Activated CD8-positive, alpha-beta T cell treated with anti-CD3 and anti-CD28 coated beads for 36 hours (primary cell): ENCODE measurements at regions of chr2 and their contacts with region 1.

Region 1: GRCh38 chr2:11583840-11584524 is 50.1 kb downstream of the GREB1 start:
- DNase-seq: peak; percentile 97
- ATAC-seq: peak; percentile 95
- H3K4me3 Mint-ChIP-seq: no peak overlapping the region
- H3K27ac Mint-ChIP-seq: no peak overlapping the region
- H3K4me1 Mint-ChIP-seq: peaks cover 14% of the 10 kb centered on the region
- H3K27me3 Mint-ChIP-seq: peaks cover 1% of the 10 kb centered on the region
- CTCF ChIP-seq: peak; percentile 80

Region 2: DNA sequence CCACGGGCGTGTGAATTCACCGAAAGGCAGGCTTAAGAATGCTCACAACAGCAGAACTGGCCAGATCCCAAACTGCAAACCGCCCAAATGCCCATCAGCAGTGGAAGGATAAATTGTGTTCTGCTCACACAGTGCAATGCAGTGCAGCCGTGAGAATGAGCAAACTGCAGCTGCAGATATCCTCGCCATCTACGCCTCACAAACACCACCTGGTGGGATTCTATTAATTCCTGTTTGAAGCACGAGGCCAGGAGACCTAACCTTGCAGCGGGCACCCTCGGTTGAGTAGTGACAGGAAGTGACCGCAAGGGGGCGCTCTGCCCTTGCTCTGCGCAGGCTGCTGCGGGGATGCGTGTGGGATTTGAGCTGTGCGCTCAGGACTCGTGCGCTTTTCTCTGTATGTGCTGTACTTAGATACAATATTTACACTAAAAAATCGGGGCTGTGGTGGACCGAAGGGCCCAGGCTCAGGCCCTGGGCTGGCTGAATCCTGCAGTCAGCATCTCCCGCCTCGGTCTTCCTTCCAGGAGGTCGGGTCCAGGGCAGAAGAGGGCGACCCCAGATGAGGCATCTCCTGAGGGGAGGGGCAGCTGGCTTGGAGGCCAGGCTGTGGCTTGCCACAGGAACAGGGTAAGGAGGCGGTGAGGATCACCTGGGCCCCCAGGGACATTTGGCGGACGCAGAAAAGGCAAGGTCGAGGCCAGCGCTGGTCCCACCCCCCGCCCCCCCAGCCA is 751.6 kb before region 1 on chr2:
- CTCF ChIA-PET with region 1: interaction called, 16 read pairs
- POLR2A ChIA-PET with region 1: no interaction called
- intact Hi-C with region 1: loop called (anchors 10 kb)
- DNase-seq: peak; percentile 89
- ATAC-seq: peak; percentile 92
- H3K4me3 Mint-ChIP-seq: no peak overlapping the region
- H3K27ac Mint-ChIP-seq: no peak overlapping the region
- H3K4me1 Mint-ChIP-seq: peaks cover 3% of the 10 kb centered on the region
- H3K27me3 Mint-ChIP-seq: peaks cover 20% of the 10 kb centered on the region
- CTCF ChIP-seq: peak; percentile 97

Region 3: GRCh38 chr2:11129598-11130449 is 454.2 kb before region 1 on chr2:
- CTCF ChIA-PET with region 1: interaction called, 94 read pairs
- POLR2A ChIA-PET with region 1: interaction called, 4 read pairs
- intact Hi-C with region 1: loop called (anchors 2 kb)
- DNase-seq: peak; percentile 77
- ATAC-seq: peak; percentile 86
- H3K4me3 Mint-ChIP-seq: peak overlapping the region; percentile 65
- H3K27ac Mint-ChIP-seq: peak overlapping the region; percentile 23
- H3K4me1 Mint-ChIP-seq: peaks cover 18% of the 10 kb centered on the region
- H3K27me3 Mint-ChIP-seq: no peaks in the 10 kb centered on the region
- CTCF ChIP-seq: peak; percentile 41

Region 4: DNA sequence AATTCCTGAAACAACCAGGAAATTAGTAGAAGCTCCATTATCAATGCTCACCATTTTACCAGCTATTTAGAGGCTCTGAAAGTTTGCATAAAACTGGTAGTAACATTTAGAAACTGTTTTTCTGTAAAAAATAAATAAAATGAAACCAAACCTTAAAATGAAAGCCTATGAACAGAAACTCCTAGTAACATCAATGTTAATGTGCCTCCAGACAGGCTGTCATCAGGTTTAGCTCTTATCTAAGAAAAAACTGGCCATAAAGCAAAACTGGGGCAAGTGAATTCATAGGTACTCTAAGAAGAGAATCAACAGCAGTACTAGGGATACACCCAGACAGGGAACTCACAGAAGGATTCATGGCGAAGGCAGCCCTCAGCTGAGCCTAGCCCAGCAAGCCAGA is 126.0 kb before region 1 on chr2:
- CTCF ChIA-PET with region 1: interaction called, 28 read pairs
- POLR2A ChIA-PET with region 1: no interaction called
- intact Hi-C with region 1: no loop called
- DNase-seq: no peak
- ATAC-seq: no peak
- H3K4me3 Mint-ChIP-seq: no peak overlapping the region
- H3K27ac Mint-ChIP-seq: no peak overlapping the region
- H3K4me1 Mint-ChIP-seq: peaks cover 49% of the 10 kb centered on the region
- H3K27me3 Mint-ChIP-seq: no peaks in the 10 kb centered on the region
- CTCF ChIP-seq: no peak

Region 5: DNA sequence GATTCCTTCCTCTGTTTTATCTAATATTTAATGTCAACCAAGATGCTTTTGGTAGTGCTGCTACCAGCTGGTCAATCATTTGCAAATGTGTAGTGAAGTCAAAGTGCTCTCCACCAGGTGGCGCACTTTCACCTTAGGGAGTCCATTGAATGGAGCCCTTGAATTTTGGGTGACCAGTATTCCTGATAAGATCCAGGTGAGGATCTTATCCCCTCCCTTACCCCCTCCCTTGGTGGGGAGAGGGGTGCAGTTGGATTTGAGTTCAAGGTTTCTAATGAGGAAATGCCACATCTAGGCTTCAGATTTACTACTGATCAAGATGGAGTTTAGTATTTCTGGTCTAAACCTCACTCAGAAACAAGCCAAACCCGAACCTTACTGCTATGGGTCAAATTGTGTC is 106.0 kb before region 1 on chr2:
- CTCF ChIA-PET with region 1: interaction called, 156 read pairs
- POLR2A ChIA-PET with region 1: no interaction called
- intact Hi-C with region 1: loop called (anchors 1 kb)
- DNase-seq: peak; percentile 93
- ATAC-seq: peak; percentile 75
- H3K4me3 Mint-ChIP-seq: no peak overlapping the region
- H3K27ac Mint-ChIP-seq: no peak overlapping the region
- H3K4me1 Mint-ChIP-seq: peaks cover under 1% of the 10 kb centered on the region
- H3K27me3 Mint-ChIP-seq: peaks cover 21% of the 10 kb centered on the region
- CTCF ChIP-seq: peak; percentile 93

Region 6: DNA sequence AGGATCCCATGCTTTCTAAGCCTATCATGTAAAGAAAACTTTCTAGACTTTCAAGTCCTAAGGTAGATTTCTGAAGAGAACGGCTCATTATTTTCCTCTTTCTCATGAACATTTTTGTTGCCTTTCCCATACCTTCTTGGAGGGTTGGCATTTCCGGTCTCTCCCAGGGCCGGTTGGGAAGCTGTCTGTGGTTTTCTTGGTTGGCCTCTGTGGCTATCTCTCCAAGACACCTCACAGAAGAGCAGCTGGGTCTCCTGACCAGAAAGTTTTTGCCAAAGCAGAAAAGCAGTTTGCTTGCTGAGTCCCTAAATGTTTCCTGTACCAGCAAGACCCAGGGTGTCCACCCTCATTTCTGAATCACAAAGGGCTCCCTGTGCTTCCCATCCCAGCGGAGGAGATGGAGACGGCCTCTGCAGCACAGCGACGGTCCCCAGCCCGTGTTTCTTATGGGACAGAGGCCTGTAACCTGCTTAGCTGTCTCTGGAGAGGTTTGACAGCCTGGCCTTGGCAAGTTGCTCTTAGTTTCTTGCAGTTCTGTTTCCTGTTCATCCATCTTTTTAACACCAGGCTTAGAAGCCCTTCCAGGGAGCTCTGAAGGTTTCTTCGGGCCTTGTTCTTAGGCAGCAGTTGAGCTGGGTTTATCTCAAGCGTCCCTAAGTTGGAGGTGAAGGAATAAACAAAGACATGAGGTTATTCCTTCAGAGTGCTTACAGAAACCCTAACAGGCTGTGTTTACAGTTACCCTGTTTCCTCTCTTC is 10.4 kb before region 1 on chr2:
- CTCF ChIA-PET with region 1: interaction called, 62 read pairs
- POLR2A ChIA-PET with region 1: interaction called, 3 read pairs
- intact Hi-C with region 1: no loop called
- DNase-seq: no peak
- ATAC-seq: no peak
- H3K4me3 Mint-ChIP-seq: no peak overlapping the region
- H3K27ac Mint-ChIP-seq: no peak overlapping the region
- H3K4me1 Mint-ChIP-seq: no peaks in the 10 kb centered on the region
- H3K27me3 Mint-ChIP-seq: peaks cover 2% of the 10 kb centered on the region
- CTCF ChIP-seq: no peak

Region 7: GRCh38 chr2:11829947-11830707 is 246.1 kb after region 1 on chr2:
- CTCF ChIA-PET with region 1: no interaction called
- POLR2A ChIA-PET with region 1: no interaction called
- intact Hi-C with region 1: no loop called
- DNase-seq: peak; percentile 69
- ATAC-seq: peak; percentile 78
- H3K4me3 Mint-ChIP-seq: peak overlapping the region; percentile 49
- H3K27ac Mint-ChIP-seq: peak overlapping the region; percentile 72
- H3K4me1 Mint-ChIP-seq: peaks cover 54% of the 10 kb centered on the region
- H3K27me3 Mint-ChIP-seq: peaks cover 15% of the 10 kb centered on the region
- CTCF ChIP-seq: no peak